Transverse colon (tissue), 4 donors: ENCODE measurements at regions of chr5 and their contacts with region 1.

Region 1: GRCh38 chr5:167969998-167970397 is 321.4 kb upstream of the WWC1 start:
- DNase-seq: no peak
- H3K4me3 ChIP-seq: no peak overlapping the region
- H3K27ac ChIP-seq: no peak overlapping the region
- H3K4me1 ChIP-seq: no peaks in the 10 kb centered on the region
- H3K27me3 ChIP-seq: no peaks in the 10 kb centered on the region
- CTCF ChIP-seq: no peak
- EP300 ChIP-seq: no peak
- POLR2A ChIP-seq: no peak

Region 2: DNA sequence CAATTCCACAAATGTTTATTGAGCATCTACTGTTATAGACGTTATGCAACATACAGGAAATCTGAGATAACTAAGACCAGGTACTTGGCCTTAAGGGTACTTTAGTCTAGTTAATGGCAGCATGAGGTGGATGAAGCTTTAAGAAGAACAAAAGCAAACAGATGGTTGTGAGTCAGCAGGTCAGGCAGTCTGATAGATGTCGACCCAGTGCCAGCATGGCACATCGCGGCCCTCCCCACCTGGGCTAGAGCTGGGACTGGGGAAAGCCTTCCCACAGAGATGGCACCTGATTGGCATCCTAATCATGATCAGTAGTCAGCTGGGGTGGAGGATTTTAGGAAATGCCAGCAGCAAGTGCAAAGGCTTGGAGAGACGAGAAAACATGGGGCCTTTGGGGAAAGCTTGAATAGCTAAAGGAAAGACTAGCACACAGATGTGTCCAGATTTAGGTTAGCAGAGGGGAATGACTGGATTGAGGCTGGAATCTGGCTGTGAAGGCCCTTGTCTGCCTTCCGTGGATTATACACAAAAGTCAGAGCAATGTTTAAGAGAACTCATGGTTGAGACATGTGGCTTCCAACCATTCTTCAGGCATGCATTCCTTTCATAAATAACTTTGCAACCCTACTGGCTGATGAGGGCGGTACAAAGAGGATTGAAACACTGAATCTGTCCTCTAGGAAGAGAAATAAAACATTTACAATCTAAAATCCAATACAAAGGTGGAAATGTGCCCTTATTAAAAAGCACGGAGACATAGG is 73.9 kb before region 1 on chr5:
- in situ Hi-C with region 1: no loop called
- intact Hi-C with region 1: loop called (anchors 2 kb)
- DNase-seq: no peak
- H3K4me3 ChIP-seq: no peak overlapping the region
- H3K27ac ChIP-seq: no peak overlapping the region
- H3K4me1 ChIP-seq: no peaks in the 10 kb centered on the region
- H3K27me3 ChIP-seq: no peaks in the 10 kb centered on the region
- CTCF ChIP-seq: no peak
- EP300 ChIP-seq: no peak
- POLR2A ChIP-seq: no peak